Transverse colon (tissue), 4 donors: ENCODE measurements at regions of chr7 and their contacts with region 1.

Region 1: DNA sequence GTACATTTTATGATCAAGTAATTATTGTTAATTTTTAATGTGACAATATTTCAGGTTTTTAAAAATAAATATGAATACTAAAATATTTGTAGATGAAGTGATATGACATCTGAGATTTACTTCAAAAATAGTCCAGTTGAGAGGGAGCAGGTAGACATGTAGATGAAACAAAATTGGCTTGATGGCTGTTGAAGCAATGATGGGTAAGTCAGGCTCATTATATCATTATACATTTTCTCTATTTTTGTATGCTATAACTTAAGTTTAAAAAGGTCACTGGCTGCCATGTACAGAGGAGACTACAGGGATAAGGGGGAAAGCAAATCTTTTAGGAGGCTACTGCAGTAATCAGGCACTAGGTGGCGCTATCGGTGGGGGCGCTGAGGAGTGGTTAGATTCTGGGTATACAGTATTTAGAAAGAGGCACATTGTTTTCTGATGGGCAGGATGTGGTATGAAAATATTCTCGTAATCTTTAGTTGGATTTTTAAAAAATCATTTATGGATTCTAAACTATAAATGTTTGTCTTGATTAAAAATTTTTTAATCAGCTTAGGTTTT is 189.8 kb upstream of the IMMP2L start:
- DNase-seq: peak; percentile 57
- H3K4me3 ChIP-seq: no peak overlapping the region
- H3K27ac ChIP-seq: no peak overlapping the region
- H3K4me1 ChIP-seq: no peaks in the 10 kb centered on the region
- H3K27me3 ChIP-seq: no peaks in the 10 kb centered on the region
- CTCF ChIP-seq: peak; percentile 62 to 72 (median 70)
- EP300 ChIP-seq: no peak
- POLR2A ChIP-seq: no peak

Region 2: GRCh38 chr7:111639934-111640333 is 112.2 kb before region 1 on chr7:
- in situ Hi-C with region 1: no loop called
- intact Hi-C with region 1: no loop called
- DNase-seq: no peak
- H3K4me3 ChIP-seq: no peak overlapping the region
- H3K27ac ChIP-seq: no peak overlapping the region
- H3K4me1 ChIP-seq: no peaks in the 10 kb centered on the region
- H3K27me3 ChIP-seq: no peaks in the 10 kb centered on the region
- CTCF ChIP-seq: no peak
- EP300 ChIP-seq: no peak
- POLR2A ChIP-seq: no peak

Region 3: DNA sequence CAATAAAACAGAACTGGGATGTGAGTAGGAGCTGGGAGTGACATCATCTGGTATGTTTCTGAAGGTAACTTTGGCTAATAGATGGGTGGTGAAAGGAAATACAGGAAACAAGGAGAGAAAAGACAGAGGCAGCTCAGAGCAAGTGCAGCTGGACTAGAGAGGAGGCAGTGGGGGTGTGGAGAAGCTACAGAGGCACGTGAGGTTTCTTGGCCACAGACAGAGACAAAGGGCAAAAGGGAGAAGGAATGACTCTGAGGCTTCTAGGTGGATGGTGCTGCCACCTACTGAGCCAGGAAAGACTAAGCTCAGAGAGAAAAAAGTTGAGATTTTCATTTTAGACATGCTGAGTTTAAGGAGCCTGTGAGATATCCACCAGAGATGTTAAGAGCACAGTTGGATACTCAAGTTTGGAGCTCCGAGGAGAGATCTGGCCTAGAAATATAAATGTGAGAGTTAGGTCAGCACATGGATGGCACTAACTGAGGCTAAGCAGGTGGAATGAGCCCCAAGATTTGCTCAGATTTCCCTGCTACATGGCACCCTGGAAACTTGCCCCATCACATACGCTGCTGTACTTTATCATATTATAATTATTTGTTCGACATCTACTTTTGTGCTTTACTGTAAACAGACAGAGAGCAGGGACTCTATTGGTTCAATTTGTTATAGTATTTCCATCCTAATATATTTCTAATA is 103.2 kb after region 1 on chr7:
- in situ Hi-C with region 1: loop called in 1 of 4 experiments (anchors 25 kb)
- intact Hi-C with region 1: no loop called
- DNase-seq: peak; percentile 53
- H3K4me3 ChIP-seq: no peak overlapping the region
- H3K27ac ChIP-seq: no peak overlapping the region
- H3K4me1 ChIP-seq: peaks cover 0 to 24% (median 9%) of the 10 kb centered on the region in 4 donors
- H3K27me3 ChIP-seq: no peaks in the 10 kb centered on the region
- CTCF ChIP-seq: peak; percentile 14 to 56 (median 37)
- EP300 ChIP-seq: no peak
- POLR2A ChIP-seq: no peak

Region 4: DNA sequence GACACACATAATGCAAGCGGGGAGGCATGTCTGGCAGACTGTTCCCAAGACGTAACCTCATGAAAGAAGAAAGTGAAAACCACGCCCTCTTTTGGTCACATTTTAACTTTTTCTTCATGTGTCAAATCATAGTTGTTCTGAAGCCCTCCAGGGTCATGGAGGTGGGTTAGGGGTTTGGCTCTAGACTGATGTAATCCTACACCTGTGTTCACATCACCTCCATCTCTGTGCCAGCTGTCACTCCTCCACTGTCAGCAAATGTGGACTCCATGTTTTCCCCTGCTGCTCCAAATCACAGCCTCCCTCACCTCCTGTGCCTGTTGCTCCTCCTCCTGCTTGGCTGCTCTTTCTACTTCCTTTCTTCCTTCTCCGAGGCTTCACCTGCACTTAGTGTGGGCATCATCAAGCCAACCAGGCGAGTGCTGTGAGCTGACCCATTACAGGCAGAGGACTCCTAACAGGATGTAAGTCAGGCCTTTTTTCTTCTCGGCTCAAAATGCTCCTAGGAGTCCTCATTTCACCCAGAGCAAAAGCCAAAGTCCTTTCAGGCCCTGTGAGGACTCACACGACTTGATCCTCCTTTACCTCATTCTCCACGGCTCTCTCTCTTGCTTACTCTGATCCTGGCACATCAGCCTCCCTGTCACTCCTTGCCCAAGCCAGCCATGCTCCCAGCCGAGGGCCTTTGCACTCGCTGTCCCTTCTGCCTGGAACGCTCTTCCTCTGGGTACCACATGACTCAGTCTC is 631.7 kb after region 1 on chr7:
- in situ Hi-C with region 1: loop called in 1 of 4 experiments (anchors 25 kb)
- intact Hi-C with region 1: no loop called
- DNase-seq: no peak
- H3K4me3 ChIP-seq: no peak overlapping the region
- H3K27ac ChIP-seq: no peak overlapping the region
- H3K4me1 ChIP-seq: no peaks in the 10 kb centered on the region
- H3K27me3 ChIP-seq: no peaks in the 10 kb centered on the region
- CTCF ChIP-seq: no peak
- EP300 ChIP-seq: no peak
- POLR2A ChIP-seq: no peak

Region 5: DNA sequence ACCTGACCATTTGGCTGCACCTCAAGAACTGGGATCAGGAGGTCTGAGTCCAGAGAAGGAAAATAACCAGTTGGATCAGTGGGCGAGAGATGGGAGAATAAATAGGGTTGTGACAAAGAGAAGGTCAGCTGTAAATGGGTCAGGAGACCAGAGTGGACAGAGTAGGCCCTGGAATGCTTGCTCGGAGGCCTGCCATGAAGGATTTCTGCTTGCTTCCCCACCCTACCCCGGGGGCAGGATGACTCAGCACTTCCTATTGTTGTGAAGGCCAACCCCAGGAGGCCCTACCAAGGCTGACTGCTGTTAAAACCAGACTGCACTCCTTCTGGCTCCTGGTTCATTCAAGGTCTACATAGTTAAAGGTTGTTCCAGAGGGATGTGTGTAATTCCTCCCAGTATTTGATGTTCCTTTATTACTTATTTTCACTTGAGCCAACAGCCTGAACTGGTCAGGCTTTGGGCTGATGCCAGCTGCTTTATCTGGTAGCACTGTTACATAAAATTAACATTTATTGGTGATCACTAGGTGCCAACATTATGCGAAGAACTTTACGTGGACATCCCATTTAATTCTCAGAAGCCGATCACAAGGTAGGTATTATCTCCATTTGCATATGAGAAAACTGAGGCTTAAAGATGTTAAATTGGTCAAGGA is 670.9 kb after region 1 on chr7:
- in situ Hi-C with region 1: loop called in 3 of 4 experiments (anchors 25 kb)
- intact Hi-C with region 1: no loop called
- DNase-seq: peak; percentile 55
- H3K4me3 ChIP-seq: no peak overlapping the region
- H3K27ac ChIP-seq: no peak overlapping the region
- H3K4me1 ChIP-seq: peaks cover 0 to 15% (median 12%) of the 10 kb centered on the region in 4 donors
- H3K27me3 ChIP-seq: no peaks in the 10 kb centered on the region
- CTCF ChIP-seq: no peak
- EP300 ChIP-seq: no peak
- POLR2A ChIP-seq: no peak

Region 6: GRCh38 chr7:112510001-112510742 is 758.1 kb after region 1 on chr7:
- in situ Hi-C with region 1: loop called in 1 of 4 experiments (anchors 25 kb)
- intact Hi-C with region 1: no loop called
- DNase-seq: no peak
- H3K4me3 ChIP-seq: no peak overlapping the region
- H3K27ac ChIP-seq: no peak overlapping the region
- H3K4me1 ChIP-seq: no peaks in the 10 kb centered on the region
- H3K27me3 ChIP-seq: no peaks in the 10 kb centered on the region
- CTCF ChIP-seq: no peak
- EP300 ChIP-seq: no peak
- POLR2A ChIP-seq: no peak